ENCODE measurements at regions of chr2 and their contacts with region 1.

Region 1: DNA sequence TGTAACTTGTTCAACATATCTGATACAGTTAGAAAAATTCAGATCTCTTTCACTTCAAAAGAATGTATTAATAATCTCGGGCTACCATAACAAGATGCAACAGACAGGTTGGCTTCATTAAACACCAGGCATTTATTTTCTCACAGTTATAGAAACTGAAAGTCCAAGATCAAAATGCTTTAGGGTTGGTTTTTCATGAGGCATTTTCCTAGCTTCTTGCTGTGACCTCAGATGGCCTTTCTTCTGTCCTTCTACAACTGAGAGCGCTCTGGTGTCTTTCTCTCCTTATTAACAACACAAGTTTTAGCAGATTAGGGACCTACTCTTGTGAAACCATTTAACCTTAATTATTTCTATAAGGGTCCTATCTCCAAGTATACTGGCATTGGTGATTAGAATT is 452.5 kb downstream of the ZNF804A start:
- DNase-seq: no peak
- ATAC-seq: no peak
- H3K4me3 ChIP-seq: no peak overlapping the region
- H3K27ac ChIP-seq: no peak overlapping the region
- H3K4me1 ChIP-seq: no peaks in the 10 kb centered on the region
- H3K27me3 ChIP-seq: no peaks in the 10 kb centered on the region
- CTCF ChIP-seq: no peak

Region 2: DNA sequence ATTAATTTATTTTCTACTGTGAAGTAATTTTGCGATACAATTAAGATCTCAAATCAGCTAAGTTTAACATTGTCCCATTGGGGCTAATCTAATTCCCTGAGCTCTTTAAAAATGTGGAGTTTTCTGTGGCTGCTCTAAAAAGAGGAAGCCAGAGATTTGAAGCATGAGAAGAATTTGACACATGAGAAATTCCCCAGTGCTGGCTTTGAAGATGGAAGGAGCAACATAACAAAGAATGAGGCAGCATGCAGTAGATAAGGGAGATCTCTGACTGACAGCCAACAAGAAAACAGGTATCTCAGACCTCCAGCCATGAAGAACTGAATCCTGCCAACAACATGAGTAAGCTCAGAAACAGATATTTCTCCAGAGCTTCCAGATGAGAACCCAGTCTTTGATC is 144.1 kb before region 1 on chr2:
- CTCF ChIA-PET with region 1: no interaction called
- POLR2A ChIA-PET with region 1: no interaction called
- intact Hi-C with region 1: no loop called
- DNase-seq: no peak
- ATAC-seq: no peak
- H3K4me3 ChIP-seq: no peak overlapping the region
- H3K27ac ChIP-seq: no peak overlapping the region
- H3K4me1 ChIP-seq: no peaks in the 10 kb centered on the region
- H3K27me3 ChIP-seq: no peaks in the 10 kb centered on the region
- CTCF ChIP-seq: no peak

Region 3: DNA sequence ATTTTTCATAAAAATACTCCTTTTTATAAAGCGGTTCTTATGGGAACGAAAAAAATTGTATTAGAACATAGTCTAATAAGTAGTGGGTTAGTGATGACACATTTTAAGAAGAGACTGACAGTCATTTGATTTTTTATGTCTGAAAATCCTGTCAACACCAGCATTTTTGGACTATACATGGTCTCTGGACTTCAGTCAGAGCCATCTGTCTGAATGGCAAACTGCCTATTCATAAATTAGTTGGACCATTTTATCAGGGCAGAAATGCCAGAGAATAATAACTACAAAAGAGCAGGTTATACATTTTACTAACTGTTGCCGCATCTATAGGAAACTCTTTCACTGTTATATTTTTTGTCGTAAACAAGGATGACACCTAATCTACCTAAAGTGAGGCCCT is 14.9 kb before region 1 on chr2:
- CTCF ChIA-PET with region 1: no interaction called
- POLR2A ChIA-PET with region 1: no interaction called
- intact Hi-C with region 1: no loop called
- DNase-seq: no peak
- ATAC-seq: no peak
- H3K4me3 ChIP-seq: no peak overlapping the region
- H3K27ac ChIP-seq: no peak overlapping the region
- H3K4me1 ChIP-seq: no peaks in the 10 kb centered on the region
- H3K27me3 ChIP-seq: no peaks in the 10 kb centered on the region
- CTCF ChIP-seq: no peak

Region 4: GRCh38 chr2:185074156-185074555 is 23.4 kb after region 1 on chr2:
- CTCF ChIA-PET with region 1: no interaction called
- POLR2A ChIA-PET with region 1: no interaction called
- intact Hi-C with region 1: loop called (anchors 1 kb)
- DNase-seq: no peak
- ATAC-seq: no peak
- H3K4me3 ChIP-seq: no peak overlapping the region
- H3K27ac ChIP-seq: no peak overlapping the region
- H3K4me1 ChIP-seq: no peaks in the 10 kb centered on the region
- H3K27me3 ChIP-seq: no peaks in the 10 kb centered on the region
- CTCF ChIP-seq: no peak

Measured in PC-3 (cell line).